ENCODE measurements at regions of chr1 and their contacts with region 1.

Region 1: DNA sequence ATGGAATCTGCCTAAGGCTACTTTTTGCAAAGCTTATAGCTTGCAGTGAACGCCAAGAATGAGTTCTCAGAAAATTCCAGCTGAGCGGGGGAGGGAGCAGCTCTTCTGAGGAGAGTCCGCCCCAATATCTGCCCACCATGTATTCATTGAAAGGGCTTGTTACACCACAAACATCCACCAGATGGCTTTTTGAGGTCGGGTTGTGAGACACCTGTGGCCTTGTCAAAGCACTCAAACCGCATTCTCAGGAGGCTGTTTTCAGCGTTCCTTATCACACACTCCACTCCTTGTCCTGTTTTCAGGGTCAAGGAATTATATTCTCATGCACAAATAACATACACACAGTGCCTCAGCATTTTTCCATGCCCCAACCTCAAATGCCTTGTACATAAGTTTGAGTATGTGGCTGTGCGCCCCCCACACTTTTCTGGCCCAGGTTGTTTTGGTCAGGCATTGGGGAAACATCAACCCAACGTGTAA is 3.9 kb upstream of the C4BPB start:
- DNase-seq: peak; percentile 78 to 84 (median 83)
- H3K4me3 ChIP-seq: no peak overlapping the region
- H3K27ac ChIP-seq: no peak overlapping the region
- H3K4me1 ChIP-seq: peaks cover 0 to 26% (median 12%) of the 10 kb centered on the region in 4 experiments
- H3K27me3 ChIP-seq: no peaks in the 10 kb centered on the region

Region 2: DNA sequence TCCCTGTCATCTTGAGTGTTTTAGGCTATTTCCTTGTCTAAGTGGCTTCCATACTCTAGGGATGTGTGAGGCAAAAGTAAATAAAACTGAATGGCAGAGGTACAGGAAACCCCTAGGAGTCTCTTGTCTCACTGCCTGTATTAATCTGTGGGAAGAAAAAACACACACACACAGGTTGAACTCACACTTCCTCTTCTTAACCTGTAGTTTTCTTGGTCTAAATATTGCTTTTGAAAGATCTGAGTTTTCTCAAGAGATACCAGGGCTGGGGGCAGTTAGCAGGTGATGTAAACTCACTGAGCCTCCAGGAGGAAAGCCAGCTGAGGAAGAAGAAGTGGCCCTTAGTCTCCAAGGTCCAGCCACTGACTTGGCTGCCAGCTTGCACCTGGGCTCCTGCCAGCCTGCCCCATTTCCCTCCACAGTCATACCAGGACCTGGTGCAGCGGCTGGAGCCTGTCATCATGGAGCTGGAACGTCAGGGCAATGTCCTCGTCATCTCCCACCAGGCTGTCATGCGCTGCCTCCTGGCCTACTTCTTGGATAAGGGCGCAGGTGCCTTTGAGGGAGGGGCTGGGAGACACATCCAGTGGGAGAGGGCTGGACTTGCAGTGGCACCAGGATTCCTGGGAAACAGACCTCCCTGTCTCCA is 14.8 kb before region 1 on chr1:
- CTCF ChIA-PET with region 1: interaction called, 18 read pairs
- POLR2A ChIA-PET with region 1: no interaction called
- DNase-seq: peak in 2 of 3 donors; percentile 39 to 53
- H3K4me3 ChIP-seq: no peak overlapping the region
- H3K27ac ChIP-seq: peak overlapping the region in 1 of 2 experiments; percentile 21
- H3K4me1 ChIP-seq: peaks cover 20 to 51% (median 41%) of the 10 kb centered on the region in 4 experiments
- H3K27me3 ChIP-seq: no peaks in the 10 kb centered on the region

Region 3: DNA sequence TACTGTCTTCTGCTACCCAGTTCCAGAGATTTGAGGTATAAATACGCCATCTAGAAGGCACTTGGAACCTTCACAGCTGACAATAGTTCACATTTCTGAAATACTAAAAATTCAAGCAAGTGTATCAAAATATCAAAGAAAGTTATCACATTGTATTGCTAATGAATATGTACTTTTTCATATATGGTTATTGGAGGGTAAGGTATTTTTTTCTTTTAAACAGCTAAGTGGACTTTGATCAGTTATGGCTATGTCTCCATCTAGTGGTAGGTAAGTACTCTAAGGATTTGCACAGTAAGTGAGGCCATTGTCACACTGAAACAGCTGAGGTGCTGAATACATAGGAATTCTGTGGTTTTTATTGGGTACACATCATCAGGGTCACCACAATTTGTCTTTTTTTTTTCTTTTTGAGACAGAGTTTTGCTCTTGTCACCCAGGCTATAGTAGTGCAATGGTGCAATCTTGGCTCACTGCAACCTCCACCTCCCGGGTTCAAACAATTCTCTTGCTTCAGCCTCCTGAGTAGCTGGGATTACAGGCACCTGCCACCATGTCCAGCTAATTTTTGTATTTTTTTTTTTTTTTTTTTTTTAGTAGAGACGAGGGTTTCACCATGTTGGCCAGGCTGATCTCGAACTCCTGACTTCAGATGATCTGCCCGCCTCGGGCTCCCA is 320.2 kb after region 1 on chr1:
- CTCF ChIA-PET with region 1: interaction called, 38 read pairs
- POLR2A ChIA-PET with region 1: no interaction called
- DNase-seq: peak; percentile 70 to 84 (median 81)
- H3K4me3 ChIP-seq: no peak overlapping the region
- H3K27ac ChIP-seq: no peak overlapping the region
- H3K4me1 ChIP-seq: peaks cover 0 to 6% (median 1%) of the 10 kb centered on the region in 4 experiments
- H3K27me3 ChIP-seq: no peaks in the 10 kb centered on the region

Measured in common myeloid progenitor, CD34-positive (primary cell).